ENCODE measurements at regions of chr6 and their contacts with region 1.

Region 1: DNA sequence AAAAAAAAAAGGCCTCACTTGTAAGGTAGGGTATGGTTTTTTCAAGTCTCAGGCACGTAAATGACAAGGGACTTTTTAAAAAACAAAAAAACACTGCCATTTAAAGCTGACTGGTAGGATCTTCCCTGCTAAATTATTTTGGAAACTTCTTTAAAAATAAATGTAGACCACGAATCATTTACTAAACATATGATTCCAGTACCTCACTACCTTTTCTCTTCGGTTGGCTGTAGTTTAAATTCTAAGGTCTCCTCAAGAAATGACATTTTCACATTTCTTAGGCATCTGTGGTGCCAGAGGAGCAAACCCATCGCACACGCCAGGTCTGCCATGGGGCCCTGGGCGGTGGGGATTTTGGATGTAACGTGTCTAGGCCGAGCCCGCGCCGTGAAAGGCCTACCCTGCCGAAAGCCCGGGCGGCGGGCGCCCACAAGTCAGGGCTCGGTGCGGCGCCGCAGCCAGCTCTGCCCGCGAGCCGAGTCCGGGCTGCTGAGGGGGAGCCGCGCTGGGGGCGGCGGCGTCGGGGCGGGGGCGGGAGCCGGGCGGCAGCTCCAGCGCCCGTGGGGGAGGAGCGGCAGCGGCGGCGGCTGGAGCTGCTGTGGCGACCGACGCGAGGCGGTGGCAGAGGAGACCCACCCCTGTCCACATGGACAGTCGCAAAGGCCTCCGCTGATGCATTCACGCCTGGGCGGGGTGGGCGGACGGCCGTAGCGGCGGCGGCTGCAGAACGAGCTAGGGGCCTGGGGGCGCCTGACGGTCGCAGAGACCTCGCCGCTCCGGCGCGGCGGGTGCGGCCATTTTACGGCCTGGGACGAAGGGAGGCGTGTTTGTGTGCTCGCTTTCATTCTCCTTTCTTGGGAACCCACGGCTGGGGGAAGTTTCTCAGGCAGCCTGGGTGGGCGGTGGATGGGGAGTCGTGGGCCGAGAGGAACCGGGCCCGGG is at the start of gene SENP6:
- DNase-seq: peak; percentile 50 to 89 (median 72)
- ATAC-seq: peak; percentile 69
- H3K4me3 ChIP-seq: peak within 1 kb of the TSS; percentile 74 to 90
- H3K4me3 Mint-ChIP-seq: peak within 1 kb of the TSS; percentile 98
- H3K27ac ChIP-seq: peak within 1 kb of the TSS; percentile 90
- H3K27ac Mint-ChIP-seq: peak within 1 kb of the TSS; percentile 98
- H3K4me1 ChIP-seq: peaks cover 42% of the 10 kb centered on the region
- H3K4me1 Mint-ChIP-seq: peaks cover 72% of the 10 kb centered on the region
- H3K27me3 ChIP-seq: no peaks in the 10 kb centered on the region
- H3K27me3 Mint-ChIP-seq: no peaks in the 10 kb centered on the region
- CTCF ChIP-seq: no peak
- total RNA-seq, gene SENP6: 83.6 to 94.8 TPM

Region 2: GRCh38 chr6:73653571-73654424 is 1947.8 kb before region 1 on chr6 and contains the start of gene SLC17A5:
- CTCF ChIA-PET with region 1: no interaction called
- POLR2A ChIA-PET with region 1: interaction called, 4 read pairs
- intact Hi-C with region 1: loop called in 1 of 2 experiments (anchors 5 kb)
- DNase-seq: peak; percentile 81 to 94 (median 88)
- ATAC-seq: peak; percentile 85
- H3K4me3 ChIP-seq: peak within 1 kb of the TSS; percentile 78 to 94
- H3K4me3 Mint-ChIP-seq: peak within 1 kb of the TSS; percentile 99
- H3K27ac ChIP-seq: peak within 1 kb of the TSS; percentile 92 to 95
- H3K27ac Mint-ChIP-seq: peak within 1 kb of the TSS; percentile 97
- H3K4me1 ChIP-seq: peaks cover 20% of the 10 kb centered on the region
- H3K4me1 Mint-ChIP-seq: peaks cover 29% of the 10 kb centered on the region
- H3K27me3 ChIP-seq: no peaks in the 10 kb centered on the region
- H3K27me3 Mint-ChIP-seq: no peaks in the 10 kb centered on the region
- CTCF ChIP-seq: no peak
- total RNA-seq, gene SLC17A5: 4.9 to 5.5 TPM

Region 3: GRCh38 chr6:75284632-75285286 is 316.8 kb before region 1 on chr6 and contains the start of gene TMEM30A:
- CTCF ChIA-PET with region 1: no interaction called
- POLR2A ChIA-PET with region 1: interaction called, 12 read pairs
- intact Hi-C with region 1: loop called (anchors 1 kb)
- DNase-seq: peak; percentile 89 to 100 (median 96)
- ATAC-seq: peak; percentile 96
- H3K4me3 ChIP-seq: peak within 1 kb of the TSS; percentile 65 to 97
- H3K4me3 Mint-ChIP-seq: no peak within 1 kb of the TSS
- H3K27ac ChIP-seq: peak within 1 kb of the TSS; percentile 72 to 88
- H3K27ac Mint-ChIP-seq: no peak within 1 kb of the TSS
- H3K4me1 ChIP-seq: peaks cover 47% of the 10 kb centered on the region
- H3K4me1 Mint-ChIP-seq: peaks cover 44% of the 10 kb centered on the region
- H3K27me3 ChIP-seq: no peaks in the 10 kb centered on the region
- H3K27me3 Mint-ChIP-seq: no peaks in the 10 kb centered on the region
- CTCF ChIP-seq: no peak
- total RNA-seq, gene TMEM30A: 19.4 to 27.1 TPM

Region 4: GRCh38 chr6:75611702-75612375 is 10.3 kb after region 1 on chr6:
- CTCF ChIA-PET with region 1: interaction called, 3 read pairs
- POLR2A ChIA-PET with region 1: interaction called, 7 read pairs
- intact Hi-C with region 1: loop called in 1 of 2 experiments (anchors 1 kb)
- DNase-seq: peak in 4 of 9 experiments; percentile 18 to 57 (median 35)
- ATAC-seq: peak; percentile 52
- H3K4me3 ChIP-seq: no peak overlapping the region
- H3K4me3 Mint-ChIP-seq: peak overlapping the region; percentile 12
- H3K27ac ChIP-seq: peak overlapping the region in 1 of 2 experiments; percentile 16
- H3K27ac Mint-ChIP-seq: peak overlapping the region; percentile 55
- H3K4me1 ChIP-seq: peaks cover 55% of the 10 kb centered on the region
- H3K4me1 Mint-ChIP-seq: peaks cover 94% of the 10 kb centered on the region
- H3K27me3 ChIP-seq: no peaks in the 10 kb centered on the region
- H3K27me3 Mint-ChIP-seq: no peaks in the 10 kb centered on the region
- CTCF ChIP-seq: no peak

Region 5: DNA sequence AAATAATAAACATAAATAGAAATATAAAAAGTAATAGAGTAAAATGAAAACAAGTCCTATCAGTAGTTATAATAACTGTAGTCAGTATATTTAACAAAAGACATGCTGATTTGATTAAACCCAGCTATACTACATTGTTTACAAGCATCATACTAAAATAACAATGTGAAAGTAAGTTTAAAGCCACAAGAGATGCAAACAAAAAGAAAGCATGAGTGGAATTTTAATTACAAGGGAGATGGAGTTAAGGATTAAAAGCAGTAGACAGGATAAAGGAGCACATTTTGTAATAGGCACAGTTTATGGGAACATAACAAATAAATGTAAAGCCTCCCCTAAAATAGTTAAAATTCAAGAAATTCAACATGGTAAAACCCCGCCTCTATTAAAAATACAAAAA is 41.6 kb after region 1 on chr6:
- CTCF ChIA-PET with region 1: no interaction called
- POLR2A ChIA-PET with region 1: interaction called, 5 read pairs
- intact Hi-C with region 1: loop called in 1 of 2 experiments (anchors 5 kb)
- DNase-seq: no peak
- ATAC-seq: no peak
- H3K4me3 ChIP-seq: no peak overlapping the region
- H3K4me3 Mint-ChIP-seq: no peak overlapping the region
- H3K27ac ChIP-seq: no peak overlapping the region
- H3K27ac Mint-ChIP-seq: no peak overlapping the region
- H3K4me1 ChIP-seq: no peaks in the 10 kb centered on the region
- H3K4me1 Mint-ChIP-seq: peaks cover 5% of the 10 kb centered on the region
- H3K27me3 ChIP-seq: no peaks in the 10 kb centered on the region
- H3K27me3 Mint-ChIP-seq: no peaks in the 10 kb centered on the region
- CTCF ChIP-seq: no peak

Region 6: DNA sequence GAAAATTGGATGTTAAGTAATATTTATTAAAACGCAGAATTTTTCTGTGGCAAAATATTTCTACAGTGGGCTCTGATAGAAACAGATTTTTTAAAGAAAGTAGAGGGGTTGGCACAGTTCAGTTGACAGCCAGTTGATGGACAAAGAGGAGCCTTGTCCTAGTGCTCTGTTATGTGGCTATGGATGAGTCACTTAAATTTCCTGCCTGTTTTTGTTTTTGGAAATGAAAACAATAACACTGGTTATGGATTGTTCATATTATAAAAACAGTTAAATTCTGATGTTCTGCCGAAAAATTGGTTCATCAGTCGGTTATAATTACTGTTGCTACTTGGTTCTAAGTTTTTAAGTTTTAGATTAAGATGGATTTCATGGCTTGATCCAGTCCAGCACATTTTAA is 190.3 kb after region 1 on chr6:
- CTCF ChIA-PET with region 1: no interaction called
- POLR2A ChIA-PET with region 1: no interaction called
- intact Hi-C with region 1: no loop called
- DNase-seq: no peak
- ATAC-seq: no peak
- H3K4me3 ChIP-seq: no peak overlapping the region
- H3K4me3 Mint-ChIP-seq: no peak overlapping the region
- H3K27ac ChIP-seq: no peak overlapping the region
- H3K27ac Mint-ChIP-seq: no peak overlapping the region
- H3K4me1 ChIP-seq: no peaks in the 10 kb centered on the region
- H3K4me1 Mint-ChIP-seq: no peaks in the 10 kb centered on the region
- H3K27me3 ChIP-seq: no peaks in the 10 kb centered on the region
- H3K27me3 Mint-ChIP-seq: peaks cover 11% of the 10 kb centered on the region
- CTCF ChIP-seq: no peak

Measured in CD8-positive, alpha-beta T cell (primary cell).